Right ventricle myocardium superior (tissue), 1 donor: ENCODE measurements at regions of chr2 and their contacts with region 1.

Region 1: DNA sequence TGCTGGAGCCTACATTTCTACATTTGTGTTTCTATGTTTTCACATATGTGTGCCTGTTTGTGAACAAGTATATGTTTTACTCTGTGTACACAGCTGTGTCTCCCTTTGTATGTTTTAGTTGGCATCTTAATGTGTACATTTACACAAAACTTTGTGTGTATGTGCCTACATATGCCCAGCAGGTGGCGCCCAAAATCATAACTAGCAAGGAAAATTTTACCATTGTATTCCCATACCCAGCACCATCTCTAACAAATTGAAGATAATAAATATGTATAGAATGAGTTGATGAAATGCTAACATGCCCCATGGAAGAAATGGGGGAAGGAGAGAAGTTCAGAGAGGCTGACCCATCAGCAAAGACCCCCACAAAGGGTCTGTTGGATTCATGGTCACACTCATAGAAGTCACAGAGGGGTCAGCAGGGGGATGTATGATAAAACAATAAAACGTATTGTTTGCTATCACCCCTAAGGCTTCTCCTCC is 48.1 kb downstream of the PKDCC start:
- DNase-seq: peak; percentile 83
- ATAC-seq: peak; percentile 68

Region 2: GRCh38 chr2:42196403-42197267 is 100.7 kb after region 1 on chr2:
- intact Hi-C with region 1: loop called (anchors 5 kb)
- DNase-seq: no peak
- ATAC-seq: peak; percentile 74

Region 3: GRCh38 chr2:42238644-42239288 is 142.8 kb after region 1 on chr2:
- intact Hi-C with region 1: loop called (anchors 5 kb)
- DNase-seq: no peak
- ATAC-seq: peak; percentile 92

Region 4: GRCh38 chr2:42286268-42286946 is 190.4 kb after region 1 on chr2:
- intact Hi-C with region 1: no loop called
- DNase-seq: no peak
- ATAC-seq: no peak

Region 5: GRCh38 chr2:42359965-42360483 is 264.1 kb after region 1 on chr2:
- intact Hi-C with region 1: loop called (anchors 10 kb)
- DNase-seq: no peak
- ATAC-seq: no peak